ENCODE measurements at regions of chr5 and their contacts with region 1.

Region 1: GRCh38 chr5:39714036-39714698 is 289.4 kb upstream of the DAB2 start:
- DNase-seq: peak; percentile 84
- H3K4me3 ChIP-seq: no peak overlapping the region
- H3K27ac ChIP-seq: no peak overlapping the region
- H3K4me1 ChIP-seq: no peaks in the 10 kb centered on the region
- H3K27me3 ChIP-seq: no peaks in the 10 kb centered on the region
- CTCF ChIP-seq: peak; percentile 42 to 65
- POLR2A ChIP-seq: no peak

Region 2: DNA sequence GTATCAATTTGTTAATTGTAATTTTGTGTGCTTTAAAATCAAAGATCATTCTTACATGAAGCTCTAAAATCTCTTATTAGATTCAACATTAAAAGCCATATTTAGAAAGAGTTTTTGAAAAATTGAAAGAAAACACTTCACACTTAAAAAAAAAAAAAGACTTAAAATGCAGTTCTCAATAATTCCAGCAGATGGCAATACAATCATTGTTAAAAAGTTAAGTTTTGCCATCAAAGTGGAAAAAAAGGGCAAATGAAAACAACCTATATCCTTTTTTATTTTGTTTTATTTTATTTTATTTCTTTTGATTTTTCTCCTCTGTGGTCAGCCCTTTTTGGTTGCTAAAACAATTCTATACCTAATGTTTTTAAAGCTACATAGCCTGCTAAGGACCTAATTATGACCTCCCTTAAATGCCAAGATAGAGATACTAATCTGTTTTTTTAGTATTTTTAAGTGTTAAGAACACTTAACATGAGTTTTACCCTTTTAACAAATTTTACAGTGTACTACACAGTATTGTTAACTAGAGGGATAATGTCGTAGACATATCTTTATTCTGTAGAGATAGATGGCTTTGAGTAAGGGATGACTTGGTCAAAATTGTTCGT is 135.2 kb before region 1 on chr5:
- CTCF ChIA-PET with region 1: interaction called, 4 read pairs
- POLR2A ChIA-PET with region 1: no interaction called
- dilution Hi-C with region 1: no loop called
- intact Hi-C with region 1: loop called (anchors 5 kb)
- DNase-seq: peak; percentile 38
- H3K4me3 ChIP-seq: no peak overlapping the region
- H3K27ac ChIP-seq: no peak overlapping the region
- H3K4me1 ChIP-seq: peaks cover 4% of the 10 kb centered on the region
- H3K27me3 ChIP-seq: no peaks in the 10 kb centered on the region
- CTCF ChIP-seq: peak; percentile 18
- POLR2A ChIP-seq: no peak

Region 3: GRCh38 chr5:39599721-39600431 is 114.3 kb before region 1 on chr5:
- CTCF ChIA-PET with region 1: interaction called, 5 read pairs
- POLR2A ChIA-PET with region 1: no interaction called
- dilution Hi-C with region 1: no loop called
- intact Hi-C with region 1: loop called (anchors 2 kb)
- DNase-seq: peak; percentile 43
- H3K4me3 ChIP-seq: no peak overlapping the region
- H3K27ac ChIP-seq: no peak overlapping the region
- H3K4me1 ChIP-seq: no peaks in the 10 kb centered on the region
- H3K27me3 ChIP-seq: no peaks in the 10 kb centered on the region
- CTCF ChIP-seq: peak; percentile 21 to 28
- POLR2A ChIP-seq: no peak

Region 4: GRCh38 chr5:40716000-40716399 is 1001.8 kb after region 1 on chr5:
- CTCF ChIA-PET with region 1: interaction called, 19 read pairs
- POLR2A ChIA-PET with region 1: no interaction called
- dilution Hi-C with region 1: no loop called
- intact Hi-C with region 1: no loop called
- DNase-seq: peak; percentile 45
- H3K4me3 ChIP-seq: no peak overlapping the region
- H3K27ac ChIP-seq: no peak overlapping the region
- H3K4me1 ChIP-seq: peaks cover 7% of the 10 kb centered on the region
- H3K27me3 ChIP-seq: no peaks in the 10 kb centered on the region
- CTCF ChIP-seq: peak in 1 of 2 donors; percentile 19
- POLR2A ChIP-seq: no peak